Activated CD4-positive, alpha-beta memory T cell treated with anti-CD3 and anti-CD28 coated beads for 36 hours (primary cell): ENCODE measurements at regions of chr5 and their contacts with region 1.

Region 1: GRCh38 chr5:80960531-80961375 is 590 bp downstream of the RASGRF2 start:
- DNase-seq: peak; percentile 60
- H3K4me3 Mint-ChIP-seq: peak overlapping the region; percentile 81
- H3K27ac Mint-ChIP-seq: peak overlapping the region; percentile 56
- H3K4me1 Mint-ChIP-seq: peaks cover 55% of the 10 kb centered on the region
- H3K27me3 Mint-ChIP-seq: peaks cover 6% of the 10 kb centered on the region

Region 2: DNA sequence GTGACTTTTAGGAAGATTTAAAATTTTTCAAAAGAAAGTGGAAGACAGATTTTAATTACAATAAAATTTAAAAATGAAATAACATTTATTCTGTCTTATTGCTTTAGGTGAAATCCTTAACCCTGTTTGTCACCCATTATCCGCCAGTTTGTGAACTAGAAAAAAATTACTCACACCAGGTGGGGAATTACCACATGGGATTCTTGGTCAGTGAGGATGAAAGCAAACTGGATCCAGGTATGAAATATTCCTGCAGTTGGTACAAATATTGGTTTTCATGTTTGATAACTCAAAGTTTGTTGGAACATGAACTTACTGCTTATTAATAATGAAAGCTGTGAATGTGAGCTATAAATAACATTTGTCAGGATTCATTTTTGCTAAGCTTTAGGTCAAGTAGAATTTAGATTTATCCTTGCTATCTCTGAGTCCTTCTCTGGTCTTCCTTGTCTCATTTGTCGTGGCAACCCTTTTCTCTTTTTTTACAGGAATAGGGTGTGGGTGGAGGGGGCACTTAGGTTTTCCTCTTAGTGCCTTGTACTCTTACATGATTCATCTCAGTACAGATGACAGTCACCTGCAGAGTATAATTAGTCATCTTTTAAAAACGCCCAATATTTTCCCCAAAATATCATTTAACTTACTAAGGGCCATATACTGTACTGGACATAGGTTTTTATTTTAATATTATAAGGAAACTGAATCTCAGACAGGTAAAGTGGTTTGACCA is 95.9 kb before region 1 on chr5:
- CTCF ChIA-PET with region 1: no interaction called
- POLR2A ChIA-PET with region 1: no interaction called
- intact Hi-C with region 1: loop called (anchors 2 kb)
- DNase-seq: peak; percentile 41
- H3K4me3 Mint-ChIP-seq: no peak overlapping the region
- H3K27ac Mint-ChIP-seq: no peak overlapping the region
- H3K4me1 Mint-ChIP-seq: peaks cover 48% of the 10 kb centered on the region
- H3K27me3 Mint-ChIP-seq: no peaks in the 10 kb centered on the region

Region 3: GRCh38 chr5:80884929-80885328 is 75.8 kb before region 1 on chr5:
- CTCF ChIA-PET with region 1: no interaction called
- POLR2A ChIA-PET with region 1: no interaction called
- intact Hi-C with region 1: loop called (anchors 2 kb)
- DNase-seq: peak; percentile 12
- H3K4me3 Mint-ChIP-seq: no peak overlapping the region
- H3K27ac Mint-ChIP-seq: peak overlapping the region; percentile 65
- H3K4me1 Mint-ChIP-seq: peaks cover 21% of the 10 kb centered on the region
- H3K27me3 Mint-ChIP-seq: no peaks in the 10 kb centered on the region

Region 4: DNA sequence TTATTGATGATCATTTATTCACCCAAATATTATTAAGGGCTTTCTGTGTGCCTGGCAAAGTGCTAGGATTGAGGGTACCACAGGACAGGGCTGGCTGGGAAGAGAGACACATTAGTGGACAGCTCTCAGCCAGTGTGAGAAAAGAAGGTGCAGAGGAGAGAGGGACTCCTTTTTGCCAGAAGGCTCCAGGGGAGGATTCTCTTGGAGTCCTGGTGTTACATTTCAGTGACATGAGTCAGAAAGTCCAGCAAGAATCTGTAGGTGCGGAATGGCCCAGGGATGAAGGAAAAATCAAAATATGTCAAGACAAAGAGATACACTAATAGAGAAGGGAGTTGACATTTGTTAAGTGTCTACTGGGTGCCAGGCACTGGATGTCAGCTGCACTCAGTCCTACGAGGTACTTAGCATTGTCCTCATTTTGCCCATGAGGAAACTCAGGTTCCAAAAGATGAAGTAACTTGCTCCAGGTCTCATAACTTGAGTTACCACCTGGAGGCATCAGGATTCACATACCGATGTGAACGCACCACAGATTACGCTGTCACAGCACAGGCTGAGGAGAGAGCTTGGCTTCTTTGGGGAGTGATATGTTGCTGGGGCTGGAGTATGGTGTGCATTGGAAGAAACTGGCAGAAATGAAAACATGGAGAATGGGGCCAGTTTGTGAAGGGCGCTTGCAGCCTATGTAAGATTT is 59.9 kb after region 1 on chr5:
- CTCF ChIA-PET with region 1: no interaction called
- POLR2A ChIA-PET with region 1: no interaction called
- intact Hi-C with region 1: no loop called
- DNase-seq: no peak
- H3K4me3 Mint-ChIP-seq: no peak overlapping the region
- H3K27ac Mint-ChIP-seq: no peak overlapping the region
- H3K4me1 Mint-ChIP-seq: peaks cover 80% of the 10 kb centered on the region
- H3K27me3 Mint-ChIP-seq: no peaks in the 10 kb centered on the region

Region 5: DNA sequence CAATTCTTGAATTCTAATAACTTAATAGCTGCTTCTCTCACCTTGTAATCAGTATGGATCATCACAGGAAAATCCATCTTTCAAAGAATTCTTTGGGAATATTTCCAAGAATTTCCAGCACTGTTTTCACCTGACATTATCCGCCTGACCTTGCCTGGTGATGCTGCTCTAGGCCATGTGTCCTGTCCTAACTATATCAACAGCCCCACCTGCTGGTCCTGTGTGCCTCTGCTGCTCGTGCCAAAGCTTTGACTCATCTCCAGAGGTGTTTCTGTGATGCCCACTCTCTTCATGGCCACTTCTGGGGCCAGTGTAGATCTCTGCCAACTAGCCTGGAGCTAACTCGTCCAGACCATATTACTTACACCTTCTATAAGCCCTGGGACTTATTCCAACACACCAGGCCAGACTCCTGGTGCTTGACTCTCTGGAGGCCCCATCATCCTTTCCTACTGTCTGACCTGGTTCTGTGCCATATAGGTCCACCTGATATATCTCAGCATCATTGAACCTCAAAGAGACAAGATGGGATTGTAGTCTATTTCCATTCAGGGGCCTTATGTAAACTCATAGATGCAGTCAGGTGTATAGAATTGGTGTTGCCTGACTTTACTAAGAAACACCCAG is 204.9 kb after region 1 on chr5:
- CTCF ChIA-PET with region 1: interaction called, 3 read pairs
- POLR2A ChIA-PET with region 1: no interaction called
- intact Hi-C with region 1: loop called (anchors 2 kb)
- DNase-seq: peak; percentile 81
- H3K4me3 Mint-ChIP-seq: no peak overlapping the region
- H3K27ac Mint-ChIP-seq: no peak overlapping the region
- H3K4me1 Mint-ChIP-seq: peaks cover 18% of the 10 kb centered on the region
- H3K27me3 Mint-ChIP-seq: no peaks in the 10 kb centered on the region